A673 (cell line): ENCODE measurements at regions of chr13 and their contacts with region 1.

Region 1: GRCh38 chr13:84641491-84641890 is 759.2 kb upstream of the SLITRK1 start:
- DNase-seq: no peak
- H3K4me3 ChIP-seq: no peak overlapping the region
- H3K27ac ChIP-seq: no peak overlapping the region
- H3K4me1 ChIP-seq: peaks cover 5% of the 10 kb centered on the region
- H3K27me3 ChIP-seq: no peaks in the 10 kb centered on the region
- CTCF ChIP-seq: no peak

Region 2: GRCh38 chr13:84630476-84630875 is 11.0 kb before region 1 on chr13:
- CTCF ChIA-PET with region 1: no interaction called
- POLR2A ChIA-PET with region 1: interaction called, 10 read pairs
- intact Hi-C with region 1: no loop called
- DNase-seq: no peak
- H3K4me3 ChIP-seq: no peak overlapping the region
- H3K27ac ChIP-seq: no peak overlapping the region
- H3K4me1 ChIP-seq: no peaks in the 10 kb centered on the region
- H3K27me3 ChIP-seq: no peaks in the 10 kb centered on the region
- CTCF ChIP-seq: no peak